ENCODE measurements at regions of chr7 and their contacts with region 1.

Region 1: DNA sequence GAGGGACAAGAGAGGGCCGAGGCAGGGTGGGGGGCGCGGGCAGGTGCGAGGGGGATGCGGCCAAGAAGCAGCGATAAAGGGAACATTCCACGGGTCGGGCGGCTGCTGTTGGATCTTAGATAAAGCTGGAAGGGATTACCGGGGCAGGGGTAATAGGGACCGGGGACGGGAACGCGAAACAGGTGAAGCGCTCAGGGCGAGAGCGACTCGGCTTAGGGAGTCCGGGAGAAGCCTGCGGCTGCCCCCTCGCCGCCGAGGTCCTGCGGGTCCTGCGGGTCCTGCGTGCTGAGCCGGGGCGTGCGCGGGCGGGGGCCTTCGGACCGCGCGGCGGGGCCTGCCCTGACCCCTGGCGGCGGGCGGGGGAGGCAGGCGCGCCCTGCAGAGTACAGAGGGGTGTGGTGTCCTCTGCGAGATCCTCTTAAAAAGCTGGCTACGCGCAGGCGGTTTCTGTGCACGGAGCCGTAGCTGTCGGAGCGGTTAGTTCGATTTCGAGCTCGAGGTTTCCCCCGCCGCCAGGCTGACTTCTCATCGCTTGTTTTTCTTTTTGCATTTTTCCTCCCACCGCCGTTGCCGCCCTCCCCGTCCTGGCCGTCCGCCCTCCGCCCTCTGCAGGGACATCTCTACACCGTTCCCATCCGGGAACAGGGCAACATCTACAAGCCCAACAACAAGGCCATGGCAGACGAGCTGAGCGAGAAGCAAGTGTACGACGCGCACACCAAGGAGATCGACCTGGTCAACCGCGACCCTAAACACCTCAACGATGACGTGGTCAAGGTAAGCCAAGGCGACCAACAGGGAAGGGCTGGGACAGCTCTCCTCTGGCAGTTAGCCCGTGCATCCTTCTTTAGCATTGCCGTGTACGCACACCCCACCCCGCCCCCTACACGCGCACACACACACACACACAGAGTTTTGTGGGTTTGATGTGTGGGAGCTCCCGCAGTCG is 1.4 kb downstream of the CAV1 start:
- DNase-seq: peak; percentile 90
- H3K4me3 ChIP-seq: peak overlapping the region; percentile 90
- H3K27ac ChIP-seq: peak overlapping the region; percentile 100
- H3K4me1 ChIP-seq: peaks cover 29% of the 10 kb centered on the region
- H3K27me3 ChIP-seq: no peaks in the 10 kb centered on the region
- CTCF ChIP-seq: peak; percentile 58

Region 2: GRCh38 chr7:116173051-116174028 is 352.8 kb before region 1 on chr7:
- CTCF ChIA-PET with region 1: no interaction called
- POLR2A ChIA-PET with region 1: no interaction called
- intact Hi-C with region 1: loop called (anchors 5 kb)
- DNase-seq: peak; percentile 84
- H3K4me3 ChIP-seq: no peak overlapping the region
- H3K27ac ChIP-seq: peak overlapping the region; percentile 3
- H3K4me1 ChIP-seq: peaks cover 4% of the 10 kb centered on the region
- H3K27me3 ChIP-seq: no peaks in the 10 kb centered on the region
- CTCF ChIP-seq: peak; percentile 68

Region 3: DNA sequence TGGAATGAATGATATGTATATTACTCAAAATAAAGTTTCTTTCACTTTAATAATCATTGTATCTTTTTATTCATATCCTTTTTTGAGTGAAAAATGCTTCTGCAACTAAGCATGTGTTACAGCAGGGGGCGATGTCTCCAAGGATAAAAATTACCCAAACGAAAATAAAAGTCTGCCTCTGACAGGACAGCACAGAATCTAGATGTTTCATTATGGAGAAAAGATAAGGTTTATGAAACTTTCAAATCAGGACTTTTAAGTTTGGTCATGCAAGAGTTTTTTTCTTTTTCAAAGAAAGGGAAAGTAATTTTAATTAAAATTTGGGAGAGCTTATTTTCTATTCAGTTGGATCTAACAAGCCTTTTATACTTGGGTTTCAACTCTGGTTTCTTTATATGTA is 267.5 kb before region 1 on chr7:
- CTCF ChIA-PET with region 1: interaction called, 9 read pairs
- POLR2A ChIA-PET with region 1: interaction called, 3 read pairs
- intact Hi-C with region 1: loop called (anchors 2 kb)
- DNase-seq: peak; percentile 86
- H3K4me3 ChIP-seq: no peak overlapping the region
- H3K27ac ChIP-seq: peak overlapping the region; percentile 79
- H3K4me1 ChIP-seq: peaks cover 36% of the 10 kb centered on the region
- H3K27me3 ChIP-seq: no peaks in the 10 kb centered on the region
- CTCF ChIP-seq: peak; percentile 87

Region 4: DNA sequence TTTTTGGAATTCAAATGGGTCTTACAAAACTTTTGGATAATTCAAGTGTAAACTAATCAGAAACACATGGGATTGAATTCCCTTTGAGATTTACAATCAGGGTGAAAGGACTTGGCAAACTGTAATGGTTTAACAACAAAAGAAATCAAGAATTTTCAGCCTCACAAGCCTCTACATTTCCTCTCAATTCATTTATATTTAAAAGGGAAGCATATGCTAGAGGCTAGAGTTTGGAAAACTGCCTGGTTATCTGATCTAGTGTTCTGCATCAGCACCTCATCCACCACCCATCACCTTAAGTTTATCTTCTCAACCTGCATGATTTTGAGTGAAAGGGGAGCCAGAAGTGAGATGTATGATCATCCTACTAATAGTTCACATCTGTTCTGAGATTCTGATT is 195.2 kb before region 1 on chr7:
- CTCF ChIA-PET with region 1: no interaction called
- POLR2A ChIA-PET with region 1: no interaction called
- intact Hi-C with region 1: loop called (anchors 2 kb)
- DNase-seq: peak; percentile 96
- H3K4me3 ChIP-seq: no peak overlapping the region
- H3K27ac ChIP-seq: peak overlapping the region; percentile 86
- H3K4me1 ChIP-seq: peaks cover 40% of the 10 kb centered on the region
- H3K27me3 ChIP-seq: no peaks in the 10 kb centered on the region
- CTCF ChIP-seq: no peak

Region 5: GRCh38 chr7:116443101-116443523 is 83.1 kb before region 1 on chr7:
- CTCF ChIA-PET with region 1: no interaction called
- POLR2A ChIA-PET with region 1: no interaction called
- intact Hi-C with region 1: loop called (anchors 5 kb)
- DNase-seq: peak; percentile 58
- H3K4me3 ChIP-seq: no peak overlapping the region
- H3K27ac ChIP-seq: peak overlapping the region; percentile 78
- H3K4me1 ChIP-seq: peaks cover 72% of the 10 kb centered on the region
- H3K27me3 ChIP-seq: no peaks in the 10 kb centered on the region
- CTCF ChIP-seq: no peak

Region 6: GRCh38 chr7:116468534-116468933 is 57.7 kb before region 1 on chr7:
- CTCF ChIA-PET with region 1: no interaction called
- POLR2A ChIA-PET with region 1: interaction called, 25 read pairs
- intact Hi-C with region 1: loop called (anchors 1 kb)
- DNase-seq: peak; percentile 96
- H3K4me3 ChIP-seq: no peak overlapping the region
- H3K27ac ChIP-seq: peak overlapping the region; percentile 99
- H3K4me1 ChIP-seq: peaks cover 83% of the 10 kb centered on the region
- H3K27me3 ChIP-seq: no peaks in the 10 kb centered on the region
- CTCF ChIP-seq: no peak

Region 7: GRCh38 chr7:116499168-116500077 is 26.8 kb before region 1 on chr7 and contains the start of gene CAV2:
- CTCF ChIA-PET with region 1: interaction called, 5 read pairs
- POLR2A ChIA-PET with region 1: interaction called, 3 read pairs
- intact Hi-C with region 1: loop called (anchors 2 kb)
- DNase-seq: peak; percentile 93
- H3K4me3 ChIP-seq: peak within 1 kb of the TSS; percentile 65
- H3K27ac ChIP-seq: peak within 1 kb of the TSS; percentile 98
- H3K4me1 ChIP-seq: peaks cover 26% of the 10 kb centered on the region
- H3K27me3 ChIP-seq: no peaks in the 10 kb centered on the region
- CTCF ChIP-seq: no peak
- total RNA-seq, gene CAV2: 265 and 286 TPM in 2 replicates